ENCODE measurements at regions of chr10 and their contacts with region 1.

Region 1: DNA sequence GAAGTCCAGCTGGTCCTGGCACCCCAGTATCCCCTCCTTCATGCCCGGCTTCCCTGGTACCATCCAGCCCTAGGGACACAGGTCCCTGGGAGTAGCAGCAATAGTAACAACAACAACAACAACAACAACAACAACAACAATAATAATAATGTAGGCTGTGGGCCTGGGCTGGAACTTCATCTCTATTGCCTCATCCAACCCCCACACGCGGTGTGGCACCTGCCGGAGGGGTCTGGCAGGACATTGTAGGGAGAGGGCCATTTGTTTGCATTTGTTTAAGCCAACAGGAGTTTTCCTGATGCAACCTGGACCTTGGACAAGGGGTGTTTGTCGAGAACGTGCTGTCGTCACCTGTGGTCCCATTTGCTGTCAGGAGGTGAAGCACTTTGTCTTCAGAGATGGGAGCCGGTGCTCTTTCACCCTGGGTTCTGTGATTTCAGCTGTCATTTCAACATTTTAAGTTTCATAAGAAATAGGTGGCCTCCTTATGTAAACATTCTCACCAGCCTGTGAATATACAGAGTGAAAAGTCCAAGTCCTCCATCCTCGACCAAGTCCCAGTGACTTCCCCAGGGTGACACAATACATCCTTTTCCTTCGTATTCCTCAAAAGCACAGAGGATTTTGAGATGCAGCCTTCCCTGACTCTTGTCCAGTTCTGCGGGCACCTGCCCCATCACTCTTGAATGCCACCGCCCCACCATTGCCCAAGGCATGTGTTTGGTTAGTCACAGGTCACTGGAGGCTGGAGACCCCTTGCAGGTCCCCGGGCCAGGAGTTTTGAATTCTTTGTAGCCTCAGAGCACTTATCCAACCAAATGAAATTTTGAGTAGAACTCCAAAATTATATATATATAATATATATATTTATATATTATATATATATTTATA is 9.2 kb downstream of the LHPP start:
- DNase-seq: peak; percentile 94 to 96
- H3K4me3 ChIP-seq: no peak overlapping the region
- H3K4me3 Mint-ChIP-seq: peak overlapping the region; percentile 57
- H3K27ac Mint-ChIP-seq: peak overlapping the region; percentile 95
- H3K4me1 ChIP-seq: peaks cover 25% of the 10 kb centered on the region
- H3K4me1 Mint-ChIP-seq: peaks cover 24% of the 10 kb centered on the region
- H3K27me3 ChIP-seq: no peaks in the 10 kb centered on the region
- H3K27me3 Mint-ChIP-seq: no peaks in the 10 kb centered on the region
- CTCF ChIP-seq: peak in 1 of 2 experiments; percentile 23

Region 2: DNA sequence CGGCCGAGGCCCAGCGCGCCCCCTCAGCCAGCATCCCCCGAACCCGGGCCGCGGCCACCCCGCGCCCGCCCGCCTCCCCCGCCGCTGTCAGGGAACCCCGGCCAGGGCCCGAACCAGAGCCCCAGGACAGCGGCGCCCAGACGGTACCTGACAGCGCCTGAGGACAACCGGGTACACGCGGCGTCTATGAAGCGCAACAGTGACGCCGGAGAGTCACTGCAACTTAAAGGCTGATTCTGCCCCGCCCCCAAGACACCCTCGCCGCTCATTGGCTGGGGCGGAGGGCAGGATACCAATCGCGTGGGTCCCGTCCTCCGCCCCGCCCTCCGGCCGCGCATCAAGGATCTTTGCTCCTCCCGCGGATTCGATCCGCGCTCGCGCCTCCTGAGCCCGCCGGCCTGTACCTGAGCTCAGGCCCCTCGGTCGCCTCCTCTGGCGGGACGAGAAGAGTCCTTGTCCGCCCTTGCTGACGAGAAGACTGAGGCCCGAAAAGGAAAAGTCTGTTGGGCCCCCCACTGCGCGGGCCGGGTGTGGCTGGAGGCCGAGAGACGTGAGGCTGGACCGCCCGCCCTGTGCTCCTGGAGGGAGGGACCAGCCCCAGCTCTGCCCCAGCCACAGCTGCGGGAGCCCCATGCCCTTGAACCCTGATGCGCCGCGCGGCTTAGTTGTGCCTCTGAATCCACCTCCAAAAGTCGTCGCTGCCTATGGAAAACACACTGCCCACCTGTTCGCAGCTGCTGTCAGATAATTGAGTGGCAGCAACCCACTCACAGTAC is 51.9 kb before region 1 on chr10 and contains the start of gene OAT:
- CTCF ChIA-PET with region 1: interaction called, 5 read pairs
- POLR2A ChIA-PET with region 1: interaction called, 3 read pairs
- intact Hi-C with region 1: loop called (anchors 2 kb)
- DNase-seq: peak; percentile 96 to 98
- H3K4me3 ChIP-seq: peak within 1 kb of the TSS; percentile 85
- H3K4me3 Mint-ChIP-seq: peak within 1 kb of the TSS; percentile 80
- H3K27ac Mint-ChIP-seq: peak within 1 kb of the TSS; percentile 63
- H3K4me1 ChIP-seq: peaks cover 45% of the 10 kb centered on the region
- H3K4me1 Mint-ChIP-seq: peaks cover 6% of the 10 kb centered on the region
- H3K27me3 ChIP-seq: no peaks in the 10 kb centered on the region
- H3K27me3 Mint-ChIP-seq: no peaks in the 10 kb centered on the region
- CTCF ChIP-seq: peak in 1 of 2 experiments; percentile 53
- total RNA-seq, gene OAT: 312 and 316 TPM in 2 replicates

Region 3: GRCh38 chr10:124447741-124448466 is 22.9 kb before region 1 on chr10:
- CTCF ChIA-PET with region 1: no interaction called
- POLR2A ChIA-PET with region 1: no interaction called
- intact Hi-C with region 1: loop called (anchors 2 kb)
- DNase-seq: no peak
- H3K4me3 ChIP-seq: no peak overlapping the region
- H3K4me3 Mint-ChIP-seq: peak overlapping the region; percentile 75
- H3K27ac Mint-ChIP-seq: no peak overlapping the region
- H3K4me1 ChIP-seq: peaks cover 22% of the 10 kb centered on the region
- H3K4me1 Mint-ChIP-seq: peaks cover 6% of the 10 kb centered on the region
- H3K27me3 ChIP-seq: peaks cover 2% of the 10 kb centered on the region
- H3K27me3 Mint-ChIP-seq: peaks cover 19% of the 10 kb centered on the region
- CTCF ChIP-seq: no peak

Region 4: DNA sequence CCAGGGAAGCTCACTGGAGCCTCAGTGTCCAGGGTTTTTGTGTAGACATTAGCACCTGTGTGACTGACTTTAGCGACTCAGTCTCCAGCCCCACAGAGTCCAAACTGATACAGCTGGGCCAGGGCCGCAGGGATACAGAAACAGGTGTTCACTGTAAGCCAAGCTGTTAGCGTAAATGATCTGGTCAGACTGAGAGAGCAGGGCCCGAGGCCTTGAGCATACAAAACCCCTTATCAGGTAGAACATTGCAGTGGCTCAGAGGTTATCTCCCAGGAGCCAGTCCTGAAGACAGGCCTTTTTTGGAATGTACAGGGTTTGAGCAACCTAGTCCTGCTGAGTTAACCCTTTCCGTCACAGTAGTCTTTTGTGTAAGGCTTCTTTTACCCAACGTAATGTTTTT is 15.8 kb after region 1 on chr10:
- CTCF ChIA-PET with region 1: no interaction called
- POLR2A ChIA-PET with region 1: no interaction called
- intact Hi-C with region 1: loop called (anchors 1 kb)
- DNase-seq: peak; percentile 79 to 82
- H3K4me3 ChIP-seq: no peak overlapping the region
- H3K4me3 Mint-ChIP-seq: no peak overlapping the region
- H3K27ac Mint-ChIP-seq: no peak overlapping the region
- H3K4me1 ChIP-seq: peaks cover 15% of the 10 kb centered on the region
- H3K4me1 Mint-ChIP-seq: peaks cover 19% of the 10 kb centered on the region
- H3K27me3 ChIP-seq: no peaks in the 10 kb centered on the region
- H3K27me3 Mint-ChIP-seq: no peaks in the 10 kb centered on the region
- CTCF ChIP-seq: no peak

Region 5: DNA sequence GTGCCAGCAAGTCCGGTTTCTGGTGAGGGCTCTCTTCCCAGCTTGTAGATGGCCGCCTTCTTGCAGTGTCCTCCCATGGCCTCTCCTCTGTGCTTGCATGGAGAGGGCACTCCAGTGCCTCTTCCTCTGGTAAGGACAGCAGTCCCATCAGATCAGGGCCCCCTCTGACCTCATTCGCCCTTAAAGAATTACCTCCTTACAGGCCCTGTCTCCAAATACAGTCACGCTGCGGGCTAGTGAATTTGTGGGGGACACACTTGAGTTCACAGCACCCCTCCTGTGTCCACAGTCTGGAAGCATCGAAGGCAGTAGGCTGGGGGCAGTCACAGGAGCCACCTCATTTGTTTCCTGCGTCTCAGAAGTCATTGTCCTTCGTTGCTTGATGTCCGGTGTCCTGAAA is 45.4 kb after region 1 on chr10:
- CTCF ChIA-PET with region 1: interaction called, 15 read pairs
- POLR2A ChIA-PET with region 1: no interaction called
- intact Hi-C with region 1: no loop called
- DNase-seq: no peak
- H3K4me3 ChIP-seq: no peak overlapping the region
- H3K4me3 Mint-ChIP-seq: no peak overlapping the region
- H3K27ac Mint-ChIP-seq: no peak overlapping the region
- H3K4me1 ChIP-seq: no peaks in the 10 kb centered on the region
- H3K4me1 Mint-ChIP-seq: no peaks in the 10 kb centered on the region
- H3K27me3 ChIP-seq: no peaks in the 10 kb centered on the region
- H3K27me3 Mint-ChIP-seq: no peaks in the 10 kb centered on the region
- CTCF ChIP-seq: no peak

Region 6: GRCh38 chr10:124579011-124579399 is 108.2 kb after region 1 on chr10:
- CTCF ChIA-PET with region 1: no interaction called
- POLR2A ChIA-PET with region 1: no interaction called
- intact Hi-C with region 1: no loop called
- DNase-seq: peak in 1 of 2 experiments; percentile 32
- H3K4me3 ChIP-seq: no peak overlapping the region
- H3K4me3 Mint-ChIP-seq: no peak overlapping the region
- H3K27ac Mint-ChIP-seq: no peak overlapping the region
- H3K4me1 ChIP-seq: no peaks in the 10 kb centered on the region
- H3K4me1 Mint-ChIP-seq: no peaks in the 10 kb centered on the region
- H3K27me3 ChIP-seq: no peaks in the 10 kb centered on the region
- H3K27me3 Mint-ChIP-seq: peaks cover 3% of the 10 kb centered on the region
- CTCF ChIP-seq: no peak

Region 7: GRCh38 chr10:124671486-124672075 is 200.8 kb after region 1 on chr10:
- CTCF ChIA-PET with region 1: no interaction called
- POLR2A ChIA-PET with region 1: no interaction called
- intact Hi-C with region 1: no loop called
- DNase-seq: peak; percentile 43 to 48
- H3K4me3 ChIP-seq: no peak overlapping the region
- H3K4me3 Mint-ChIP-seq: no peak overlapping the region
- H3K27ac Mint-ChIP-seq: no peak overlapping the region
- H3K4me1 ChIP-seq: peaks cover 17% of the 10 kb centered on the region
- H3K4me1 Mint-ChIP-seq: peaks cover 8% of the 10 kb centered on the region
- H3K27me3 ChIP-seq: no peaks in the 10 kb centered on the region
- H3K27me3 Mint-ChIP-seq: no peaks in the 10 kb centered on the region
- CTCF ChIP-seq: peak in 1 of 2 experiments; percentile 19

Region 8: DNA sequence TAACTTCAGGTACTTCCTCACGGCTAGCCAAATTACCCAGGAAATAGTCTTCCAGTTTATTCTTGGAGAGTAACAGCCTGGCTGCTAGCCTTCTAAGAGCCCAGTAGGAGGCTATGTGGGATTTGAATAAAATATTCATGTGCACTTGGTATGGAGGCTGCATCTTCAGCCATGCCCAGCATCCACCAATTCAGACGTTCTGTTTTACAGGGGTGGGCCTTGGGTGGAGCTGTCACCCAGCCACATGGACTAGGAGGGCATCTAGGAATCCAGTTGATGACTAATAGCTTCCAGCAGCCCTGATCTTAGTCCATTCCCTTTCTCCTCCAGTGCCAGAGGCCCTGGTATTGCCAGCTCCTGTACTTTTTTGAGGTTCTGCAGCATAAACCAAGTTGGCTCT is 404.8 kb after region 1 on chr10:
- CTCF ChIA-PET with region 1: no interaction called
- POLR2A ChIA-PET with region 1: no interaction called
- intact Hi-C with region 1: no loop called
- DNase-seq: no peak
- H3K4me3 ChIP-seq: no peak overlapping the region
- H3K4me3 Mint-ChIP-seq: no peak overlapping the region
- H3K27ac Mint-ChIP-seq: no peak overlapping the region
- H3K4me1 ChIP-seq: no peaks in the 10 kb centered on the region
- H3K4me1 Mint-ChIP-seq: no peaks in the 10 kb centered on the region
- H3K27me3 ChIP-seq: no peaks in the 10 kb centered on the region
- H3K27me3 Mint-ChIP-seq: peaks cover 3% of the 10 kb centered on the region
- CTCF ChIP-seq: no peak

Measured in Caco-2 (cell line).